ENCODE measurements at regions of chr18 and their contacts with region 1.

Region 1: DNA sequence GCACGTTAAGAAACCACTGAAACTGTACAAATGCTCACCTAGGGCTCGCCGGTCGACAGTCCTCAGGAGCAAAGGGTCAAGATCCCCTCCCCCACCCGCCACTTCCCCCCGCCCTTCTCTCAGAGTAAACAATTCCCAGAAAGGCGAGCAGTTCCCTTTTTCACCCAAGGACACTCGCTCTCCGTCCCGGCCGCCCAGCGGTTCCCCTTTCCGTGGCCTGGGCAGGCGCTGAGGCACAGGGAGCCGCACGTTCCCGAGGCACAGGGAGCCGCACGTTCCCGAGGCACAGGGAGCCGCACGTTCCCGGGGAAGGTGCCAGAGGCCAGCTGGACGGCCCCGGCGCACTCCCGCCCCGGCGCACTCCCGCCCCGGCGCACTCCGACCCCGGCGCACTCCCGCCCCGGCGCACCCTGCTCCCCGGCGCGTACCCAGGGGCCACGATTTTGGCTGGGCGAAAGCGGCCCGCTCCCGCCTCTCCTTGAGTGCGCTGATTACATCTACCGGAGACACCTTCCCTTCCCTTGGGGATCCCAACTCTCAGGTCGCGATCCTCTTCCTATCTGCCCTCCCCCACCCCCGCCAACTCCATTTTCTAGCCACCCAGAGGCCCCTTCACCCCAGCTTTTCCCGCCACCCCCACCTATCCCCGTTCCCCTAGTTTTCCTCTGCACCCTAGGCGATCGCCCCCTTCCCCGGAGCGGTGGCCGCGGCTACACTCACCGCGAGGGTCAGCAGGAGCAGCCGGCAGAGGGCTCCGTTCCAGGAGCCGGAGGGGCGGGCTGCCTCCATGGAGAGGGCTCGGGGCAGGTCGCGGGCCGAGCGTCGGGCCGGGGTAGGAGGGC is 817 bp downstream of the DSC2 start:
- DNase-seq: peak; percentile 53
- H3K4me3 ChIP-seq: peak overlapping the region; percentile 50 to 74
- H3K27ac ChIP-seq: peak overlapping the region; percentile 91 to 93
- H3K4me1 ChIP-seq: no peaks in the 10 kb centered on the region
- H3K27me3 ChIP-seq: no peaks in the 10 kb centered on the region
- CTCF ChIP-seq: no peak
- POLR2A ChIP-seq: peak; percentile 44

Region 2: DNA sequence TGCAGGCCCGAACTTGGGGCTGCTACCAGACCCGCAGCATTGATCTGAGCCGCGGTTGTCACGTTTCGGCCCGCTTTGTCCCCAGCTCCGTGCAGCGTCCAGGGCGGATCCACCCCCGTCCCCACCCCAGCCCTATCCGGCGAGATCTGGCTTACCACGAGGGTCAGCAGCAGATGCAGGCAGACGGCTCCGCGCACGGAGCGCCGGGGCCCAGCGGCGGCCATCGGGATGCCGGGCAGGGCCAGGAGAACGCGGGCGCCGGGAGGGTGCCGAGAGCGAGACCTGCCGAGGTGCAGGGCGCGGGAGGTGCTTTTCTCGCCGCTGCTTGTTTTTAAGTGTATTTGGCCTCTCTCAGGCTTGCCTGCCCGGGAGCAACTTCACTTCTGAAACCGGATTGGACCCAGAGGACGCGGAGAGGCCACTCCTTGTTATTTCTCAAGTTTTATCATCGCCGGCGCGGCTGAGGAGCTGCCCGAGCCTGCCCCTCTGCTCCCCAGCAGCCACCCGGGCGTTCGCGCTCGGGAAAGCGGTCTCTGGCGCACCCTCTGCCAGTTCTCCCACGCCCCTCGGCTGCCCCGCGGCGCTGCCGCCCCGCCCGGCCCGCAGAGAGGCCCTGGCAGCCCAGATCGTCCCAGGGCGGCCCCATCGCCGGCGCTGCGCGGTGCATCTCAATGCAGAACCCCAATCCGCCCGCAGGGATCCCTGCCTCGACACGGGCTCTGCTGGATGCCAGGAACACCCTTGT is 58.8 kb before region 1 on chr18 and contains the start of gene DSC3:
- intact Hi-C with region 1: loop called (anchors 10 kb)
- DNase-seq: peak; percentile 76
- H3K4me3 ChIP-seq: peak within 1 kb of the TSS; percentile 33 to 40
- H3K27ac ChIP-seq: peak within 1 kb of the TSS; percentile 65 to 73
- H3K4me1 ChIP-seq: no peaks in the 10 kb centered on the region
- H3K27me3 ChIP-seq: no peaks in the 10 kb centered on the region
- CTCF ChIP-seq: peak in 1 of 4 experiments; percentile 20
- POLR2A ChIP-seq: peak; percentile 66
- total RNA-seq, gene DSC3: 13.5 to 32.1 TPM